Gastrocnemius medialis (tissue), 4 donors: ENCODE measurements at regions of chr1 and their contacts with region 1.

Region 1: GRCh38 chr1:231421993-231422764 is at the start of gene EGLN1:
- DNase-seq: peak; percentile 78 to 82
- ATAC-seq: peak; percentile 48 to 67
- H3K4me3 ChIP-seq: peak within 1 kb of the TSS; percentile 75 to 87 (median 82)
- H3K27ac ChIP-seq: peak within 1 kb of the TSS; percentile 97 to 98 (median 98)
- H3K4me1 ChIP-seq: peaks cover 38 to 40% of the 10 kb centered on the region in 2 donors
- H3K27me3 ChIP-seq: no peaks in the 10 kb centered on the region
- CTCF ChIP-seq: peak in 4 of 5 experiments; percentile 7 to 31 (median 18)
- POLR2A ChIP-seq: peak; percentile 93 to 96
- total RNA-seq, gene EGLN1: 500 to 862 (median 706) TPM

Region 2: GRCh38 chr1:230867903-230868735 is 554.1 kb before region 1 on chr1 and contains the start of gene C1orf198:
- in situ Hi-C with region 1: no loop called
- intact Hi-C with region 1: loop called (anchors 10 kb)
- DNase-seq: peak; percentile 70 to 73
- ATAC-seq: peak; percentile 71 to 75
- H3K4me3 ChIP-seq: peak within 1 kb of the TSS; percentile 83 to 97 (median 86)
- H3K27ac ChIP-seq: peak within 1 kb of the TSS; percentile 80 to 95 (median 89)
- H3K4me1 ChIP-seq: peaks cover 40 to 48% of the 10 kb centered on the region in 2 donors
- H3K27me3 ChIP-seq: no peaks in the 10 kb centered on the region
- CTCF ChIP-seq: no peak
- POLR2A ChIP-seq: peak; percentile 85 to 88
- total RNA-seq, gene C1orf198: 281 to 590 (median 339) TPM

Region 3: DNA sequence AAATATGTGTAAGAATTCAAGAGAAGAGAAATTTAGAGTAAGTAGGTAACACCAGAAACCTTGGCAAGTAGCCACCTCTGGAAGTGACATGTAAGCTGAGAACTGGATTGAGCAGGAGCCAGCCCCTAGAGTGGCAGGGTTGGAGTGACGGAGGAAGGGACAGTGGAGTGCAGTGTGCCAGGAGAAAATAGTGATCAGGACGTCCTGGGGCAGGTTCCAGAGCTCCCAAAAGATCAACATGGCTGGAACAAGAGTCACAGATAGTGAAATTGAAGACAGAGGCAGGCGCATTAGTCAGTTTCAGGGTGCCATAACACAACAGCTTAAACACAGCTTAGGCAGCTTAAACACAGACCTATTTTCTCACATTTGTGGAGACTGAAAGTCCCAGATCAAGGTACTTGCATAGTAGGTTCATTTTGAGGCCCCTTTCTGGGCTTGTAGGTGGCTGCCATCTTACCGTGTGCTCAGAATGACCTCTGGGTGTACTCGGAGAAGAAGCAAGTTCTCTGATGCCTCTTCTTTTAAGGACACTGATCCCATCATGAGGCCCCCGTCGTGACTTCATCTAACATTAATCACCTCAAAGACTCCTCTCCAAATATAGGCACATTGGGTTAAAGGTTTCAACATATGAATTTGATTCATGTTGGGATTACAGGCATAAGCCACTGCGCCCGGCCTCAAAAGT is 143.9 kb before region 1 on chr1:
- in situ Hi-C with region 1: no loop called
- intact Hi-C with region 1: loop called (anchors 5 kb)
- DNase-seq: peak; percentile 94 to 95
- ATAC-seq: peak; percentile 96
- H3K4me3 ChIP-seq: no peak overlapping the region
- H3K27ac ChIP-seq: peak overlapping the region; percentile 89 to 96 (median 92)
- H3K4me1 ChIP-seq: peaks cover 18 to 28% of the 10 kb centered on the region in 2 donors
- H3K27me3 ChIP-seq: no peaks in the 10 kb centered on the region
- CTCF ChIP-seq: no peak
- POLR2A ChIP-seq: peak; percentile 42 to 62

Region 4: DNA sequence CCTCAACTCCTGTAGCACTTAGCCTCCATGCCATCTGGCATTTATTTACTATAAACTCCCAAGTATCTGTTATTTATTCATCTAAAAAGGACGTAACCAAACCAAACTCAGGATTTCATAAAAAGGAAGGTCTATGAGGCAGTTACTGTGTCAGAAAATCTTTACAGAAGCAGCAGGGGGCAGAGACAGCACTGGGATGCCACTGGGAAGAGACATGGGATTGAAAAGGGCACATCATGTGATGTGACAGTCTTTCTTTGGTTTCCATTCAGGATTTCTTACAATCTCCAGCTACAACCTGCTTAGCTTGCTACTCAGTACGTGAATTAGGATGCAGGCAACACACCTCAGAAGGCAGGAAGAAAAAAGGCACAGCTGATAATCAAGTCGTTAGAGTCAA is 52.9 kb before region 1 on chr1:
- in situ Hi-C with region 1: loop called in 1 of 4 experiments (anchors 10 kb)
- intact Hi-C with region 1: no loop called
- DNase-seq: no peak
- ATAC-seq: no peak
- H3K4me3 ChIP-seq: no peak overlapping the region
- H3K27ac ChIP-seq: peak overlapping the region; percentile 23 to 62 (median 42)
- H3K4me1 ChIP-seq: peaks cover 7 to 15% of the 10 kb centered on the region in 2 donors
- H3K27me3 ChIP-seq: no peaks in the 10 kb centered on the region
- CTCF ChIP-seq: no peak
- POLR2A ChIP-seq: no peak

Region 5: DNA sequence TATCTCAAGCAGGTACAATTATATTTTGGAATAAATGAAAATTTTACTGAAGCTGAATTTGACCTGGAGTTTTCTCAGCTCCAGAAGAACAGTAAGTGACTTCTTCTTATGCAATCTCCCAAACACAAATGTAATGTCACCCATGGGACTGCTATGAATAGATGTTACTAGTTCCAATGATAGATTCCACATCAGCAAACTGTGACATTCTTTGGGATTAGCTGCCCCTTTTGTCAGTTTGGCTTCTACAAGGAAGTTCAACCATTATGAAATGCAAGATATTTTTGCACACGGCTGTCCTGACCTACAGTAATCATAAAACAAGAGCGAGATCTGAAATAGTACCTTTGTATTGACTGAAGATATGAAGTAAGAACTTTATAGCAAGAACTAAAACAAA is 78.5 kb after region 1 on chr1:
- in situ Hi-C with region 1: no loop called
- intact Hi-C with region 1: loop called (anchors 1 kb)
- DNase-seq: peak; percentile 56 to 69
- ATAC-seq: peak; percentile 99 to 100
- H3K4me3 ChIP-seq: peak overlapping the region in 1 of 4 donors; percentile 9
- H3K27ac ChIP-seq: peak overlapping the region; percentile 87 to 95 (median 90)
- H3K4me1 ChIP-seq: peaks cover 12 to 22% of the 10 kb centered on the region in 2 donors
- H3K27me3 ChIP-seq: no peaks in the 10 kb centered on the region
- CTCF ChIP-seq: no peak
- POLR2A ChIP-seq: peak in 1 of 2 donors; percentile 40

Region 6: DNA sequence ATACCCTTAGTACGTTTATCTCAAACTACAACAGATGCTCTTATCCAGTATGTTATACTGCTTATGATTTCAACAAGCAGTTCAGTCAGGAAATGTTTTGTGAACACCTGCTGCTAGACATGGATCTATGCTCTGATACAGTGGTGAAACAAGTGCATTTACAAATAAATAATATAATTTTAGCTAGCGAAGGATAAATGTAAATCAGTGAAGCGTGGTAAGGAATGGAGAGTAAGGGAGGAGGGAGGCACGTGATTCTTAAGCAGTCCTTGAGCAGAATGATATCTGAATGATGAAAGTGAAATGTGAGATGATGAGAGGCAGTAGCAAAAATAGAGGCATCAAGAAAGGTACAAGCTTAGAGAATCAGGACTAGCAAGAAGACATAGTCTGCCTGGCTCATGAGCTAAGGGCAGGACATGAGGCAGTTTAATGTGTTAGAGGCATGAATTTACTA is 112.6 kb after region 1 on chr1:
- in situ Hi-C with region 1: loop called in 2 of 4 experiments (anchors 10 kb)
- intact Hi-C with region 1: loop called (anchors 2 kb)
- DNase-seq: peak in 1 of 2 donors; percentile 36
- ATAC-seq: peak; percentile 98 to 99
- H3K4me3 ChIP-seq: peak overlapping the region; percentile 21 to 40 (median 31)
- H3K27ac ChIP-seq: peak overlapping the region; percentile 94 to 99 (median 96)
- H3K4me1 ChIP-seq: peaks cover 33 to 71% of the 10 kb centered on the region in 2 donors
- H3K27me3 ChIP-seq: no peaks in the 10 kb centered on the region
- CTCF ChIP-seq: no peak
- POLR2A ChIP-seq: peak; percentile 72 to 92

Region 7: GRCh38 chr1:231603598-231604275 is 181.6 kb after region 1 on chr1:
- in situ Hi-C with region 1: no loop called
- intact Hi-C with region 1: loop called (anchors 5 kb)
- DNase-seq: no peak
- ATAC-seq: peak; percentile 64 to 73
- H3K4me3 ChIP-seq: peak overlapping the region; percentile 44 to 58 (median 52)
- H3K27ac ChIP-seq: peak overlapping the region; percentile 38 to 47 (median 44)
- H3K4me1 ChIP-seq: peaks cover 0 to 17% of the 10 kb centered on the region in 2 donors
- H3K27me3 ChIP-seq: no peaks in the 10 kb centered on the region
- CTCF ChIP-seq: peak; percentile 56 to 82 (median 71)
- POLR2A ChIP-seq: no peak

Region 8: DNA sequence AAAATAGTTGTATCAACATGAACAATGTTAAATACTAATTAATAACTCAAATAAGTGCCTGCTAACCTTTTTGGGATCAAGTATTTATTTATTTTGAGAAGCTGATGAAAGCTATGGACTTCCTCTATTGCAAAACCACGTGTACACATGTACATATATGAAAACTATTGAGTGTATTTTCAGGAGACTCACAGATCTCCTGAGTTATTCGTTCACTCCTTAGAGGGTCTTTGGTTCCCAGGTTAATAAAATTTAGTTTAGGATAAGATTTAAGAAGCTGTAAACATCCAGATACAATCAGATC is 334.9 kb after region 1 on chr1:
- in situ Hi-C with region 1: no loop called
- intact Hi-C with region 1: no loop called
- DNase-seq: no peak
- ATAC-seq: peak in 1 of 2 donors; percentile 41
- H3K4me3 ChIP-seq: no peak overlapping the region
- H3K27ac ChIP-seq: no peak overlapping the region
- H3K4me1 ChIP-seq: peaks cover 0 to 5% of the 10 kb centered on the region in 2 donors
- H3K27me3 ChIP-seq: no peaks in the 10 kb centered on the region
- CTCF ChIP-seq: peak in 1 of 5 experiments; percentile 6
- POLR2A ChIP-seq: no peak